B cell (primary cell): ENCODE measurements at regions of chr2 and their contacts with region 1.

Region 1: GRCh38 chr2:7427293-7428060 is 510.3 kb downstream of the RNF144A start:
- DNase-seq: peak; percentile 73
- ATAC-seq: peak; percentile 31
- H3K4me3 ChIP-seq: no peak overlapping the region
- H3K4me3 Mint-ChIP-seq: no peak overlapping the region
- H3K27ac ChIP-seq: no peak overlapping the region
- H3K27ac Mint-ChIP-seq: no peak overlapping the region
- H3K4me1 ChIP-seq: peaks cover 11 to 14% of the 10 kb centered on the region in 2 donors
- H3K4me1 Mint-ChIP-seq: peaks cover 7% of the 10 kb centered on the region
- H3K27me3 ChIP-seq: peaks cover 0 to 43% (median 11%) of the 10 kb centered on the region in 4 experiments
- H3K27me3 Mint-ChIP-seq: peaks cover 57% of the 10 kb centered on the region
- CTCF ChIP-seq: peak; percentile 81

Region 2: GRCh38 chr2:7658486-7658885 is 231.0 kb after region 1 on chr2:
- CTCF ChIA-PET with region 1: interaction called, 4 read pairs
- POLR2A ChIA-PET with region 1: no interaction called
- intact Hi-C with region 1: loop called (anchors 5 kb)
- DNase-seq: no peak
- ATAC-seq: no peak
- H3K4me3 ChIP-seq: no peak overlapping the region
- H3K4me3 Mint-ChIP-seq: no peak overlapping the region
- H3K27ac ChIP-seq: no peak overlapping the region
- H3K27ac Mint-ChIP-seq: no peak overlapping the region
- H3K4me1 ChIP-seq: no peaks in the 10 kb centered on the region
- H3K4me1 Mint-ChIP-seq: peaks cover 2% of the 10 kb centered on the region
- H3K27me3 ChIP-seq: no peaks in the 10 kb centered on the region
- H3K27me3 Mint-ChIP-seq: no peaks in the 10 kb centered on the region
- CTCF ChIP-seq: no peak

Region 3: DNA sequence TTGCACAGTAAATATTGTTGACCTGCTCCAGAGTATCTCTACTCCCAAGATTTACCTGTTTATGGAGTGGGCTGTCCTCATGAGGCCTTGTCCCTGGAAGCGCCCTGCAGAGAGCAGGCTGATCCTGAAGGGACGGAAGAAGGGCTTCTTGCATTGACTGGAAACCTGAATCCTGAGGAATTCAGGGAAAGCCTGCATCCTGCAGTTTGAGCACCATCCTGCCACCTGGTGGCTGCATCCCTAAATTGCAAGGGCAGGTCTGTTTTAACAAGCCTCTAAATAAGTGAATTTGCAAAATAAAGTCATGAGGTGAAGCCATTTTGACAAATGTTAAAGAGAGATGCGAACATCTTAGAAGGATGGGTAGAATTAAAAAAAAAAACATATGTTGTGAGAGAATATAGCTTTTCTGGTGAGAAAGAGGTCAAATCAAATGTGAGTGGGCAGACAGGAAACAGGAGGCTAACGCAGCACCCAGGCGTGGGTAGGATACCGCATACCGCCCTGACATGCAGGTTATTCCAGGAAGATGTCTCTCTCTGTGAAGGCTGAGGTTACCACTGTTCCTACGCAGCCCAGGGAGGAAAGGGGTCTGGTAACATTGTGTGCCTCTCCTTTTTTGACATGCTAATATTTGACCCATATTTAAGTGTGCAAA is 244.7 kb after region 1 on chr2:
- CTCF ChIA-PET with region 1: interaction called, 13 read pairs
- POLR2A ChIA-PET with region 1: no interaction called
- intact Hi-C with region 1: no loop called
- DNase-seq: peak; percentile 23
- ATAC-seq: no peak
- H3K4me3 ChIP-seq: no peak overlapping the region
- H3K4me3 Mint-ChIP-seq: no peak overlapping the region
- H3K27ac ChIP-seq: no peak overlapping the region
- H3K27ac Mint-ChIP-seq: no peak overlapping the region
- H3K4me1 ChIP-seq: no peaks in the 10 kb centered on the region
- H3K4me1 Mint-ChIP-seq: no peaks in the 10 kb centered on the region
- H3K27me3 ChIP-seq: no peaks in the 10 kb centered on the region
- H3K27me3 Mint-ChIP-seq: peaks cover 3% of the 10 kb centered on the region
- CTCF ChIP-seq: peak; percentile 63